Pancreas (tissue), 10 donors: ENCODE measurements at regions of chr15 and their contacts with region 1.

Region 1: DNA sequence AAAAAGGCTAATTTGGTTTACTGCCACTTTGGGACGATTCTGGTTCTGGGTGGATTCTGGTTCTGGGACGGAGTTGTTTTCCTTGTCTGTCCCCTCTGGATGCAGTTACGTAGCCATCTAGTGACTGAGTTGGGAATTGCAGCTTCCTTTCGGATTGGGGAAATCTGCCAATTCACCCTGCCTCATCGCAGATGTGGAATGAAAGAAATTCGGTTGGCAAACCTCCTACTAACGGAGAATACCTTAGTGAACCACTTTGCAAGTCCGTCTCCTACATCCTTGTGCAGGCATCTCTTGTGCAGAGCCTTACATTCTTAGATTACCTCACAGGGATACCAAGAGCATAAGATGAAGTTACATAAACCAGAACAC is 31.5 kb upstream of the AP4E1 start:
- DNase-seq: peak in 4 of 6 donors; percentile 43 to 83 (median 48)
- ATAC-seq: peak; percentile 74 to 95 (median 90)
- H3K4me3 ChIP-seq: peak overlapping the region in 2 of 4 donors; percentile 12 to 38
- H3K27ac ChIP-seq: no peak overlapping the region
- H3K4me1 ChIP-seq: peaks cover 0 to 3% (median 0%) of the 10 kb centered on the region in 3 donors
- H3K27me3 ChIP-seq: no peaks in the 10 kb centered on the region
- CTCF ChIP-seq: peak; percentile 76 to 94 (median 92)

Region 2: GRCh38 chr15:50670115-50670514 is 206.9 kb before region 1 on chr15:
- intact Hi-C with region 1: loop called in 1 of 3 experiments (anchors 5 kb)
- DNase-seq: no peak
- ATAC-seq: no peak
- H3K4me3 ChIP-seq: no peak overlapping the region
- H3K27ac ChIP-seq: no peak overlapping the region
- H3K4me1 ChIP-seq: peaks cover 0 to 7% (median 5%) of the 10 kb centered on the region in 3 donors
- H3K27me3 ChIP-seq: no peaks in the 10 kb centered on the region
- CTCF ChIP-seq: no peak

Region 3: DNA sequence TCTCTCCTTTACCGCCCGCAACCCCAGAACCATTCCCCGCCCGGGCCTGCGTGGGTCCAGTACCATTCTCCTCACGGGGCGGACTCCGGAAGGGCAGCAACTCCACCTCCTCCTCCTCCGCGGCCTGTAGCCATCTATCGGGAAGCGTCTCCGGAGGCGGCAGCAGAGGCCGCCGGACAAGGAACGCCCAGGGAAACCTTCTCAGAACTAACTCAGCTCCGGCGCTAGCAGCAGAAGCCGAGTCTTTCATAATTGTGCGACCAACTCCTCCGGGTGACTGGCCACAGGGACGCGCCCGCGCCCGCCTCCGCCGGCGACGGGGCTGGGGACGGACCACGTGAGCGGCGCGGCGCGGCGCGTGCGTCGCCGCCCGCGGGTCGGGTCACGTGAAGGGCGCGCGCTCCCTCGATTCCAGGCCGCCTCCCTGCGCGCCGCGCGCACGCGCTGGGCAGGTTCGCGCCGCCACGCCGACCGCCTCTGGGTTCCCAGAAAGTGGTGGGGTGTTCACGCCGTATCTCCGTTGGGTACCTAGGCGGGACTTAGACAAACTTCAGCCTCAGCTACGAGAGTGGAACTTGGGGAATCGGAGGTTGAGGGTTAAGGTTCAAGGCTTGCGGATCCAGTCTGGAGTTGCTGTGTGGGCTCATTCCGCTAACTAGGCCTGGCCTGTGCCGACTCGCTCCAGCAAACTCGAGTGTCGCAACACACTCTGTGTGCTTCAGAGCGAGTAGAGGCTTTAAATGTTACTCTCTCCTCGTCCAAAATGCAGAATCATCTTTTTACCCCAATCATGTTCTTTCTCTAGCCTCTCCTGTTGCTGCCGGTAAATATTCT is 190.3 kb before region 1 on chr15 and contains the start of gene TRPM7:
- intact Hi-C with region 1: loop called in 1 of 3 experiments (anchors 10 kb)
- DNase-seq: peak; percentile 83 to 95 (median 86)
- ATAC-seq: peak; percentile 92 to 98 (median 98)
- H3K4me3 ChIP-seq: peak within 1 kb of the TSS; percentile 74 to 97 (median 79)
- H3K27ac ChIP-seq: peak within 1 kb of the TSS; percentile 90 to 96 (median 94)
- H3K4me1 ChIP-seq: peaks cover 0 to 10% (median 3%) of the 10 kb centered on the region in 3 donors
- H3K27me3 ChIP-seq: no peaks in the 10 kb centered on the region
- CTCF ChIP-seq: no peak
- total RNA-seq, gene TRPM7: 10.8 to 20.7 (median 14.4) TPM

Region 4: GRCh38 chr15:51550841-51551240 is 673.9 kb after region 1 on chr15:
- intact Hi-C with region 1: no loop called
- DNase-seq: no peak
- ATAC-seq: no peak
- H3K4me3 ChIP-seq: no peak overlapping the region
- H3K27ac ChIP-seq: no peak overlapping the region
- H3K4me1 ChIP-seq: no peaks in the 10 kb centered on the region
- H3K27me3 ChIP-seq: no peaks in the 10 kb centered on the region
- CTCF ChIP-seq: no peak